GM10248 (cell line): ENCODE measurements at regions of chr5 and their contacts with region 1.

Region 1: DNA sequence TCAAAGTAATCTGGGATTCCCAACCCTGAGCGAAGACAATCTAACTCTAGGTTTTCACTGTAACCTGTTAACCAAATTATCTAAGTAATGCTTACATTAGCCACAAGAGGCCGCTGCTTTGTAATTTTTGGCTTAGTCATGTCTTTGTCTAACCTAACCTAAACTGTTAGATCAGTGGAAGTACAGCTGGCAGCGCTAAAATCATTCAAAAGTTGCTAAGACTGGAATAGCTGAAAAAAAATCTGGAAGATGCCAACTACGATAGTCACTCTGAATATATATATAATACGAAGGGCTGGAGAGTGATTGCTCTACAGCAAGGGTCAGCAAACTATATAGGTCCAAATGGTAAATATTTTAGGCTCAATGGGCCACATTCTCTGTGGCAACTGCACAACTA is 60.2 kb downstream of the FBXO38 start:
- DNase-seq: peak; percentile 49
- CTCF ChIP-seq: peak; percentile 67

Region 2: DNA sequence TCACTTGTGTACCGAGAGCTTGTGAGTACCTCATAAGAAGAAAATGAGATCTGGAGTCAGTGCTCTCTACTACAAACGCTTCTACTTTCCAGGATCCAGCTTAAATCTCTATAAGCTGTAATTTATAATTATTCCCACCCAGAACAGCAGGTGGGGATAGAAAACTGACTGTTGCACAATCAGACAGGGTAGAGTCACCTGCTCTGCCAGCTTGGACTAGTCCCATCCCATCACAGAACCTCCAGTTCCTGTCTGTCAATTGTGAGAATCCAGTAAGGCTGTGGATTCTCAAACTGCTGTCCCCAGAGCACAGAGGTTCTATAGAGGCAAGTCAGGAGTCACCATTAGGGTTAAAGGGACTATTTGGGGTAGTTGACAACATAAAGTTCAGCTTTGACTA is 129.8 kb before region 1 on chr5:
- CTCF ChIA-PET with region 1: no interaction called
- POLR2A ChIA-PET with region 1: no interaction called
- DNase-seq: no peak
- CTCF ChIP-seq: no peak

Region 3: GRCh38 chr5:148408092-148408491 is 35.9 kb before region 1 on chr5:
- CTCF ChIA-PET with region 1: interaction called, 10 read pairs
- POLR2A ChIA-PET with region 1: no interaction called
- DNase-seq: no peak
- CTCF ChIP-seq: no peak

Region 4: GRCh38 chr5:148428848-148429247 is 15.2 kb before region 1 on chr5:
- CTCF ChIA-PET with region 1: interaction called, 44 read pairs
- POLR2A ChIA-PET with region 1: no interaction called
- DNase-seq: no peak
- CTCF ChIP-seq: no peak

Region 5: GRCh38 chr5:148455185-148455584 is 11.2 kb after region 1 on chr5:
- CTCF ChIA-PET with region 1: interaction called, 23 read pairs
- POLR2A ChIA-PET with region 1: no interaction called
- DNase-seq: no peak
- CTCF ChIP-seq: no peak

Region 6: GRCh38 chr5:148482691-148483462 is 38.9 kb after region 1 on chr5:
- CTCF ChIA-PET with region 1: interaction called, 24 read pairs
- POLR2A ChIA-PET with region 1: no interaction called
- DNase-seq: peak; percentile 53
- CTCF ChIP-seq: peak; percentile 84